Heart left ventricle (tissue), 16 donors: ENCODE measurements at regions of chr1 and their contacts with region 1.

Region 1: DNA sequence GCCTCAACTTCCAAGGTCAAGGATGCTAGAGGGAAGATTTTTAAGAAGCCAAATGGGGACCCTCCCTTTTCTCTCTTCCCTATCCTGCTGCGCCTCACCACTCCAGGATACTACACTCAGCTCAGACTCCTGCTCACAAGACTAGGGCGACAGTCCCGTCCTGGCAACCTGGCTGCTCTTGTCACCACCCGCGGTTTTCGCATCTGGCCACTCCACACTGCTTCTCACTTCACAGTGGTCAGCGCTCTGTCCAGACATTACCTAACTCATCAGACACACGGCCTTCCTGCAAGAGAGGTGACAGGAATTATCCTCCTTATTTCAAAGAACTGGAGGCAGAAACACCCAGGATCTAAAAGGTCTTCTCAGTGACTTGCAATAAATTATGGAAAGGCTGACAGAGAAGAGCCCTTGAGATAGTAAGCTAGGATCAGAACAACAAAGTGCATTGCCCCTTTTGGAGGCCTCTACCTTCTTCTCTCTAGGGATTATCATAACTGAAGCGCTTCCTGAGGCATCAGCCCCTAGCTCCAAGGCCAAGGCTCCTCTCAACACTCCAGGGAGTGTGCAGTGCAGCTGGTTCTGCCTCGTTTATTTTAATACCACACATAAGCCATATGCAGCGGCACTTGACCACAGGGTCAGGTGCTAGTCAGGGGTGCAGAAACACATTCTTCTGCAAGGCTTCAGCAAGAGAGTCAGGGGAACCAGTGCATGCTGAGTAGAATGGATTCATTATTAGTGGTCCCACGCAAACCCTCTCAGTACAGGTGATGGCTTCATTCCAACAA is 41.9 kb downstream of the ASTN1 start:
- DNase-seq: no peak
- ATAC-seq: no peak
- H3K4me3 ChIP-seq: no peak overlapping the region
- H3K27ac ChIP-seq: no peak overlapping the region
- H3K4me1 ChIP-seq: no peaks in the 10 kb centered on the region
- H3K27me3 ChIP-seq: no peaks in the 10 kb centered on the region
- CTCF ChIP-seq: no peak
- POLR2A ChIP-seq: no peak

Region 2: DNA sequence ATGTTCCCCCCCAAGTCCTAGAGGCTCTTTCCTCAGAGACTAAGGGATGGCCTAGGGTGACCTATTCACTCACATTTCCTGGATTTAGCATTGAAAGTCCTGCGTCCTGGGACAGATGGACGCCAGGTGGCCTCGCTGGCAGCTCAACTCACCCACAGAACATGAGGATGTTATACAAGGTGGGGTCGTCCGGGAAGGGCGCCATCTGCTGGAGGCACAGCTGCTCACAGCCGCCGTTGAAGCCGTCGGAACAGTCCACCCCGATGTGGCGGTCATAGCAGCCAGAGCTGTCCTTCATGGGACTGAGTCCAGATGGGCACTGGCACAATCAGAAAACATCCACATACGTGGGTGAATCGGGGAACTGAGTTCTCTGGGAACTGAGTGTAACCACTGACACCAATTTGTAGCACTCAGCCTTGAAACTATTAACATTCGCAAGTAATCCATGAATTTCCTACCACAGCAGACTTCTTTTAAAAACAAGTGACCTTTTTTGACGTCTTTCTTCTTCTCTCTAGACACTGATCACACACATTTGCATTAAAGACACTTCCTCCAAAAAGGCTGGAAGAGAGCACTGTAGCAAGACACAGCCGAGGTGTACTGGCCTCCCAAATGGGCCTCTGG is 173.5 kb before region 1 on chr1:
- intact Hi-C with region 1: loop called in 1 of 10 experiments (anchors 5 kb)
- DNase-seq: peak; percentile 24 to 60 (median 52)
- ATAC-seq: peak; percentile 32 to 76 (median 66)
- H3K4me3 ChIP-seq: no peak overlapping the region
- H3K27ac ChIP-seq: no peak overlapping the region
- H3K4me1 ChIP-seq: no peaks in the 10 kb centered on the region
- H3K27me3 ChIP-seq: no peaks in the 10 kb centered on the region
- CTCF ChIP-seq: peak; percentile 26 to 67 (median 46)
- POLR2A ChIP-seq: no peak

Region 3: DNA sequence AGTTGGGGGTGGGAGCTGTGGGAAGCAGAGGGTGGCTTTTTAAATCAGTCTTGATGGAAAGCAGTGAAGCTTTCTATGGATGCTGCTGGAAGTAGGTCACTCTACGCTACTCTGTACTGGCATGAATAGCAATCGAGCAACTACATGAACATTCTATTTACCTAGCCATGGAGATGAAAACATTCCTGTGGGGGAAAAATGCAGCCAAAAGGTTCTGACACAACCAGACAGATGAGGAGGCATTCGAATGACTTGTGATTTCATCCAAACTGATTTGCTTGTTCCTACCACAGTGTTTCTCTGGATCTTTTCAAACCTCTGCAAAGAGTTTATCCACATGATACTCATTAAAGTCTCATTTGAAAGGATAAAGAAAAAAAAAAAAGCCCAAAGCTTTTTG is 53.2 kb before region 1 on chr1:
- intact Hi-C with region 1: no loop called
- DNase-seq: no peak
- ATAC-seq: no peak
- H3K4me3 ChIP-seq: no peak overlapping the region
- H3K27ac ChIP-seq: no peak overlapping the region
- H3K4me1 ChIP-seq: no peaks in the 10 kb centered on the region
- H3K27me3 ChIP-seq: no peaks in the 10 kb centered on the region
- CTCF ChIP-seq: no peak
- POLR2A ChIP-seq: no peak

Region 4: DNA sequence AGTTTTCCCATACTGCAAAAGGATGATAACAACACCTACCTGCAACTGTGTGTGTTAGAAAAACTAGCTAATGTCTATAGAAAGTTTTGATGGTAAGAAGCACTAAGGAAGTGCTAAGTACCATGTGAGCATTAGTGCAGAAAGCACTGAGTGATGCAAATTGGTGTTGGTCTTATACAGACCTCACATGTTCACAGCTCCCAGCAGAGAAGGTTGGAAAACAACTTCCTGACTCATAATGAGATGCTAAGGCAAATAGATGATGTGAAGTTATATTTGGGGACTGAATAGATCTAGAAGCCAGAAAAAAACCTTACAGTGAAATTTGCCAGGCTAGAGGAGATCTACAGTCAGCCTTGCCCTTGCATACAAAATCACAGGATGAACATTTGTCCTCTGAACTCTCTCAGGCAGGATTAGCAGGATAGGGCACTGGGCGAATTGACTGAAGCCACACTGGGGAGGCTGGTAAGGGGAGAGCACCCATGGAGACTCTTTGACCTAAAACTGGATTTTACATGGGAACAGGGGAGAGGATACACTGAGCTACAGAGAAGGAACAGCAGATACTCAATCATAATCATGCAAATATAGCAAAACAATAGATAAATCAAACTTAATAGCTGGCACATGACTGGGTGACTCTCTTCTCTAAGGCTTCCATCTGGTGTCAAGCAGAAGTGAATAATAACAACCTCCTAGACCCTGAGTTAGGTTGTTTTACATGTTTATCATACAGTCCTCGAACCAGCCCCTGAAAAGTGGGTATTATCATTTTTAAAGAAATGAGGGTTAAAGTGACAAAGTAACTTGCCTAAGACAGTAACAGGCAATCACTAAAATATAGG is 19.4 kb before region 1 on chr1:
- intact Hi-C with region 1: no loop called
- DNase-seq: no peak
- ATAC-seq: no peak
- H3K4me3 ChIP-seq: no peak overlapping the region
- H3K27ac ChIP-seq: no peak overlapping the region
- H3K4me1 ChIP-seq: no peaks in the 10 kb centered on the region
- H3K27me3 ChIP-seq: no peaks in the 10 kb centered on the region
- CTCF ChIP-seq: no peak
- POLR2A ChIP-seq: no peak

Region 5: DNA sequence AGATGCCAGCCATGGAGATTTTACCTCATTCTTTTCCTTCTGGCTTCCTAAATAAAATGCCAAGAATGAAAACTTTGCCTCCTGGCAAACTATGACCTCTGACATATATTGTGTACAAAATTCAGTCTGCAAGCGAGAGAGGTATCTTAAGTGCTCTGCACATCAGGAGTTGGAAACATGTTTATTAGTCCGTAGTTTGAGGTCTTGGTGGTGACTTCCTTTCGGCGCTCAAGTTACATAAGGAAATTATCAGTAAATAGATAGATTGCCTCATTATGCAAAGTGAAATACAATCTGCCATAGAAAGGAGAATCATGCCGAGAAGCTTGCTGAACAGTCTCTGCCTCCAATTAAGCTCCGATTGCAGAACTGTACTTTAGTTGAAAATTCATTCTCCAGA is 319.8 kb after region 1 on chr1:
- intact Hi-C with region 1: loop called in 1 of 10 experiments (anchors 5 kb)
- DNase-seq: no peak
- ATAC-seq: no peak
- H3K4me3 ChIP-seq: no peak overlapping the region
- H3K27ac ChIP-seq: no peak overlapping the region
- H3K4me1 ChIP-seq: no peaks in the 10 kb centered on the region
- H3K27me3 ChIP-seq: peaks cover 0 to 21% (median 6%) of the 10 kb centered on the region in 9 donors
- CTCF ChIP-seq: no peak
- POLR2A ChIP-seq: no peak